Naive thymus-derived CD4-positive, alpha-beta T cell (primary cell): ENCODE measurements at regions of chr4 and their contacts with region 1.

Region 1: GRCh38 chr4:26362745-26363439 is 42.1 kb downstream of the RBPJ start:
- DNase-seq: no peak
- ATAC-seq: no peak
- H3K4me3 ChIP-seq: no peak overlapping the region
- H3K4me3 Mint-ChIP-seq: no peak overlapping the region
- H3K27ac ChIP-seq: no peak overlapping the region
- H3K27ac Mint-ChIP-seq: peak overlapping the region in 1 of 9 donors; percentile 63
- H3K4me1 ChIP-seq: peaks cover 0 to 4% of the 10 kb centered on the region in 2 donors
- H3K4me1 Mint-ChIP-seq: peaks cover 13 to 49% (median 31%) of the 10 kb centered on the region in 7 donors
- H3K27me3 ChIP-seq: no peaks in the 10 kb centered on the region
- H3K27me3 Mint-ChIP-seq: no peaks in the 10 kb centered on the region

Region 2: GRCh38 chr4:26397086-26397485 is 34.2 kb after region 1 on chr4:
- CTCF ChIA-PET with region 1: no interaction called
- POLR2A ChIA-PET with region 1: no interaction called
- intact Hi-C with region 1: loop called in 1 of 2 experiments (anchors 5 kb)
- DNase-seq: no peak
- ATAC-seq: no peak
- H3K4me3 ChIP-seq: no peak overlapping the region
- H3K4me3 Mint-ChIP-seq: peak overlapping the region in 1 of 10 donors; percentile 24
- H3K27ac ChIP-seq: no peak overlapping the region
- H3K27ac Mint-ChIP-seq: peak overlapping the region in 6 of 9 donors; percentile 2 to 62 (median 39)
- H3K4me1 ChIP-seq: no peaks in the 10 kb centered on the region
- H3K4me1 Mint-ChIP-seq: peaks cover 8 to 44% (median 15%) of the 10 kb centered on the region in 7 donors
- H3K27me3 ChIP-seq: no peaks in the 10 kb centered on the region
- H3K27me3 Mint-ChIP-seq: no peaks in the 10 kb centered on the region